Naive thymus-derived CD4-positive, alpha-beta T cell (primary cell): ENCODE measurements at regions of chr20 and their contacts with region 1.

Region 1: DNA sequence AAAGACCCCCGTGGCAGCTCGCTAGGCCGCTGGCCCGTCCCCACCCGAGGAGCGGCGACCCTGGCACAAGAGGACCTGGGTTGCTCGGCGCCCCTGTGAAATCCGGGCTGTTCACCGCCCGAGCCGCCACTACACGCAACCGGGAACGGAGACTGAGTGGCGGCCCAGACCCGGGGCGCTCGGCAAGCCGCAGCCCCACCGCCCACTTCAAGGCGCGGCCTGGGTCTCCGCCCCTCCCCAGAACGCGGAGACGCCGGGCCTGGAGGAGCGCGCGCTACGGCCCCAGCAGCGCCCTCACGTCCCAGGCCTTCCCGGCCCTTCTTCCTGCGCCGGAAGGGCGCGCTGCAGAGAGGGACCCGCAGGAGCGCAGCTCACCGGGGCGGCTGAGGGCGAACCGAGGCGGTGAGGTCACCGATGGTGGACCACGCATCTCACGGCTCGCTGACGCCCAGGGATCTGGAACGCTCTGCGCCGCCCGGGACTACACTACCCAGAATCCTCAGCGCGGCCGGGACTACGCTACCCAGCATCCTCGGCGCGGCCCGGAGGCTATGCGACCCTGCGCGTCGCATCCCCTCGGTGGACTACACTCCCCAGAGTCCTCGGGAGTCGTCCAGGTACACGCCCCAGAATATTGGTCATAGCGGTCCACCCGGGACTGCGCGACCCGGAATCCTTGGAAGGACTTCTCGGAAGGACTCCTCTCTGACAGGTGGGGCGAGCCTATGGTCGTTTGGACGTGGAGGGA is at the start of gene ZNF337:
- DNase-seq: peak; percentile 84 to 94 (median 89)
- ATAC-seq: peak; percentile 100
- H3K4me3 ChIP-seq: peak within 1 kb of the TSS; percentile 85
- H3K4me3 Mint-ChIP-seq: peak within 1 kb of the TSS; percentile 94 to 97 (median 96)
- H3K27ac ChIP-seq: peak within 1 kb of the TSS; percentile 85
- H3K27ac Mint-ChIP-seq: peak within 1 kb of the TSS; percentile 84 to 96 (median 93)
- H3K4me1 ChIP-seq: peaks cover 5 to 9% of the 10 kb centered on the region in 2 donors
- H3K4me1 Mint-ChIP-seq: peaks cover 19 to 58% (median 57%) of the 10 kb centered on the region in 7 donors
- H3K27me3 ChIP-seq: no peaks in the 10 kb centered on the region
- H3K27me3 Mint-ChIP-seq: peaks cover 0 to 5% (median 0%) of the 10 kb centered on the region in 5 donors
- total RNA-seq, gene ZNF337: 18.7 to 39.8 (median 21.2) TPM

Region 2: GRCh38 chr20:25057234-25058050 is 639.1 kb before region 1 on chr20:
- CTCF ChIA-PET with region 1: no interaction called
- POLR2A ChIA-PET with region 1: no interaction called
- intact Hi-C with region 1: loop called in 1 of 2 experiments (anchors 1 kb)
- DNase-seq: peak; percentile 67 to 86 (median 74)
- ATAC-seq: peak; percentile 77
- H3K4me3 ChIP-seq: peak overlapping the region; percentile 86
- H3K4me3 Mint-ChIP-seq: peak overlapping the region; percentile 81 to 90 (median 88)
- H3K27ac ChIP-seq: peak overlapping the region; percentile 87
- H3K27ac Mint-ChIP-seq: peak overlapping the region; percentile 72 to 94 (median 88)
- H3K4me1 ChIP-seq: peaks cover 33 to 48% of the 10 kb centered on the region in 2 donors
- H3K4me1 Mint-ChIP-seq: peaks cover 38 to 63% (median 47%) of the 10 kb centered on the region in 7 donors
- H3K27me3 ChIP-seq: no peaks in the 10 kb centered on the region
- H3K27me3 Mint-ChIP-seq: peaks cover 0 to 29% (median 0%) of the 10 kb centered on the region in 5 donors

Region 3: DNA sequence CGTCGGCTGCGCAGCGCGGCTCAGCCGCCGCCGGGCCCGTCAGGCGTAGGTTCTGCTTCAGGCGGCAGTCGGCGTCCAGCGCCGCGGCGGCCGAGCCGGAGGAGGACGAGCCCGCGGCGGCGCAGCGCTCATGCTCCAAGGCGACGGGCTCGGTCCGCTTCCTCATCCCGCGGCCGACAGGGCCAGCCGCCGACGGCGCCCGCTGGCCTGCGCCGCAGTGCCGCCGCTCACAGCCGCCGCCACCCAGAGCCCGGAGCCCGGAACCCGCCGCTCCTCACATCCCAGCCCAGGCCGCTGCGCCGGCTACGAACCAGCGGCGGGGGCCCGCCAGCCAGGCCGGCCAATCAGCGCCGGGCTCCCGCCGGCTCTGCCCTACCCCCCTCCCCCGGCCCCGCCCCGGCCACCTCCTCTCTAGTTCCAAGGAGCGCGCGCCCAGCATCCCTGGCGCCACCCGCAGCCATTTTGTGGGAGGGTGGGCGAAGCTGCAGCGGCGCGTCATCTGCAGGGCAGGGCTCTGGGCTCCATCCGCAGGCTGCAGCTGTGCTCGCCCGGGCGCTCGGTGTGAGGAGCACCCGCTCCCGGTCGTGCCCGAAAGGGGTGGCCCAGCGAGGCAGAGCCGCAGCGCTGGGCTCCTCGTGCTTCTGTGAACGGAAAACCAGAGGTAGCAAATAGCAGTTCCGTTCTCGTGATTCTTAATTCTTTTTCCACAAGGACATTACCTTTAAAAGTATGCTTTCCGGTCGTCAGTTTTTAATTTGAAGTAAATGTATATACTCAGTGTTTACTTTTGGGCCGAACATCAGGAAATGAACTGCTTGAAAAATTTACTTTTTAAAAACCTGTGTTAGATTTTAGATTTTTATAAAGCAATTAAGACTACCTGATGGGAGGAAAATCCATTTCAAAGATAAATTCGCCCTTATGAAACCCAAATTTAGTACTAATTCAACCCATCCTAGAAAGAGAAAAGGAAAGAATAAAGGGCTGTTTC is 305.7 kb before region 1 on chr20 and contains the start of gene ABHD12:
- CTCF ChIA-PET with region 1: no interaction called
- POLR2A ChIA-PET with region 1: no interaction called
- intact Hi-C with region 1: loop called (anchors 1 kb)
- DNase-seq: peak; percentile 80 to 93 (median 89)
- ATAC-seq: peak; percentile 96
- H3K4me3 ChIP-seq: peak within 1 kb of the TSS; percentile 62
- H3K4me3 Mint-ChIP-seq: peak within 1 kb of the TSS; percentile 83 to 94 (median 88)
- H3K27ac ChIP-seq: peak within 1 kb of the TSS; percentile 74
- H3K27ac Mint-ChIP-seq: peak within 1 kb of the TSS; percentile 46 to 96 (median 82)
- H3K4me1 ChIP-seq: no peaks in the 10 kb centered on the region
- H3K4me1 Mint-ChIP-seq: peaks cover 5 to 22% (median 18%) of the 10 kb centered on the region in 7 donors
- H3K27me3 ChIP-seq: no peaks in the 10 kb centered on the region
- H3K27me3 Mint-ChIP-seq: peaks cover 0 to 6% (median 0%) of the 10 kb centered on the region in 5 donors
- total RNA-seq, gene ABHD12: 16.5 to 27.6 (median 22.5) TPM

Region 4: DNA sequence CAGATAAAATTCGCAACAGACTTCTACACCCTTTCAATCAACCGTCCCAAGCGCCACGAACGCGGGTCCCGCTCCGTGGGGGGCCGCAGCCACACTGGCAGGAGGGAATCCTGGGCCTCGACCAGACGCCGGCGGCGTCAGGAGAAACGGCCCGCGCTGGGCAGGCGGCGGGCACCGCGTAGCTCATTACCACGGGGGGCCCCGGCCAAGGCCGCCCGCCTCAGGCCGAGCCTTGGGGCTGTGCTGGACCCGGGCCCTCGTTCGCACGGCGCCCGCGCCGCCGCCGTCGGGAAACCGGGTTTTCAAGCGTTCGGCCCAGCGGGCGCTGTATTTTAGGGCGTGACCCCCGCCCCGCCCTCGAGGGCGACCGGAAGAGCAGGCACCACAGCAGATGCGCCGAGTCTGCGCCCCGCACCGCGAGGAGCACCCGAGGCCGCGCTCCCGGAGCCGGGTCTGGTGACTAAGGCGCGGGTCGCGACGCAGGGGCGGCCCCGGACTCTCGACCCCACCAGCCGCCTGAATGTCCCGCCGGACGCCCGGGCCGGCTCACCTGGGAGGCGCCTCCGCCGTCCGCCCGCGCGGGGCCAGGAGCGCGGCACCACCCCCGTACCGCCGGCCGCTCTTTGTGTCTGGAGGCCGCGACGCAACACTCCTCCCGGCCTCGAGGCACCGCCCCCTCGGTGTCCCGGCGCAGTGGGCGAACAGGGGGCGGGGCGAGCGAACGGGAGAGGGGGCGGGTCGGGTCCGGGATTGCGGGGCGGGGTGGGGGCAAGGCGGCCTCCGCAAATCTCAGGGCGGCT is 111.5 kb before region 1 on chr20 and contains the start of gene NINL:
- CTCF ChIA-PET with region 1: no interaction called
- POLR2A ChIA-PET with region 1: no interaction called
- intact Hi-C with region 1: loop called in 1 of 2 experiments (anchors 1 kb)
- DNase-seq: peak; percentile 6 to 64 (median 47)
- ATAC-seq: peak; percentile 84
- H3K4me3 ChIP-seq: peak within 1 kb of the TSS; percentile 50
- H3K4me3 Mint-ChIP-seq: peak within 1 kb of the TSS; percentile 68 to 91 (median 80)
- H3K27ac ChIP-seq: peak within 1 kb of the TSS; percentile 33
- H3K27ac Mint-ChIP-seq: peak within 1 kb of the TSS in 8 of 9 donors; percentile 9 to 86 (median 62)
- H3K4me1 ChIP-seq: no peaks in the 10 kb centered on the region
- H3K4me1 Mint-ChIP-seq: peaks cover 0 to 19% (median 8%) of the 10 kb centered on the region in 7 donors
- H3K27me3 ChIP-seq: no peaks in the 10 kb centered on the region
- H3K27me3 Mint-ChIP-seq: peaks cover 0 to 21% (median 15%) of the 10 kb centered on the region in 5 donors
- total RNA-seq, gene NINL: 1.4 to 4.2 (median 3.0) TPM

Region 5: GRCh38 chr20:25706793-25707192 is 10.2 kb after region 1 on chr20:
- CTCF ChIA-PET with region 1: interaction called, 4 read pairs
- POLR2A ChIA-PET with region 1: interaction called, 3 read pairs
- intact Hi-C with region 1: loop called (anchors 1 kb)
- DNase-seq: peak in 8 of 9 donors; percentile 22 to 33 (median 30)
- ATAC-seq: peak; percentile 83
- H3K4me3 ChIP-seq: no peak overlapping the region
- H3K4me3 Mint-ChIP-seq: peak overlapping the region; percentile 38 to 78 (median 66)
- H3K27ac ChIP-seq: peak overlapping the region; percentile 10
- H3K27ac Mint-ChIP-seq: peak overlapping the region; percentile 49 to 92 (median 79)
- H3K4me1 ChIP-seq: peaks cover 9 to 18% of the 10 kb centered on the region in 2 donors
- H3K4me1 Mint-ChIP-seq: peaks cover 7 to 38% (median 30%) of the 10 kb centered on the region in 7 donors
- H3K27me3 ChIP-seq: no peaks in the 10 kb centered on the region
- H3K27me3 Mint-ChIP-seq: peaks cover 0 to 11% (median 0%) of the 10 kb centered on the region in 5 donors

Region 6: DNA sequence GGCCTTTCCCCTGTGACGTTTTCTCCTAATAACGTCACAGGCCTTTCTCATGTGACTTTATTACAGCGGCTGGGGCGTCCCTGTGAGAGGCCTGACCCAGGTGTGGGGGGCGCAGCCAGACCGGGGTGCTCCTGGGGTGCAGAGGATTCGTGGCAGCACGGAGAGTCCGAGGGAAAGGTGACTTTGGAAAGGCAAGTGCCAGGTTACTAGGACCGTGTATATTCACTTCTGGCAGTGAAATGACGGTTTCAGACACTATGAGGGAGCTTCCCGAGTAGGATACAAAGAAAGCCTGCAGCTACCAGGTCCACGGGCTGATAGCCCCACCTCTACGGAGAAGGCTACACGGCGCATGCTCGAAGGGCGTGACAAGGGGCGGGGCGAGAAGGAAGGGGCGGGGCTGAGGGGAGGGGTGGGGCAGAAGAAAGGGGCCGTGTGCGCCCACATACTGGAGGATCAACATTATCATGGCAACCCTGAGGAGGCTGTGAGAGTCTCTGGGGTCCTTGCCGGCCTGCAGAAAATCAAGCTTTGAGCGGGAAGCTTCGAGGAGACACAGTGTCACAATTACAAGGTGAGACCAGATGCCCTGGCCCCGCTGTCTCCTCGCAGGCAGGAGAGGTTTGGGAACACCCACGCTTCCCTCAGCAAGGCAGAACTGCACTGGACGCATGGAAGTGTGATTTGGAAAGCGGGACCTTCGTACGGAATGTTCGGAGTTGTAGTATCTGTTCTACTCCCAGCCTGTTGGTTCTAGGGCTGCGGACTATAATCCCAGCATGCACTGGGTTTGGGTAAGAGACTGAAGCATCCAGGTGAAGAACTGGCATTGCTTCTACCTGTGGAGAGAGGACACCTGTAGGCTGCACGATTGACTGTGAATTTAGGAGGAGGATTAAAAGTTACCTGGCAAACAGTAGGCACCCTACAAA is 54.5 kb after region 1 on chr20:
- CTCF ChIA-PET with region 1: no interaction called
- POLR2A ChIA-PET with region 1: no interaction called
- intact Hi-C with region 1: loop called (anchors 1 kb)
- DNase-seq: peak; percentile 28 to 63 (median 43)
- ATAC-seq: peak; percentile 96
- H3K4me3 ChIP-seq: peak overlapping the region; percentile 68
- H3K4me3 Mint-ChIP-seq: peak overlapping the region; percentile 83 to 93 (median 86)
- H3K27ac ChIP-seq: peak overlapping the region; percentile 59
- H3K27ac Mint-ChIP-seq: peak overlapping the region; percentile 19 to 95 (median 79)
- H3K4me1 ChIP-seq: peaks cover 0 to 4% of the 10 kb centered on the region in 2 donors
- H3K4me1 Mint-ChIP-seq: peaks cover 7 to 20% (median 14%) of the 10 kb centered on the region in 7 donors
- H3K27me3 ChIP-seq: no peaks in the 10 kb centered on the region
- H3K27me3 Mint-ChIP-seq: no peaks in the 10 kb centered on the region

Region 7: DNA sequence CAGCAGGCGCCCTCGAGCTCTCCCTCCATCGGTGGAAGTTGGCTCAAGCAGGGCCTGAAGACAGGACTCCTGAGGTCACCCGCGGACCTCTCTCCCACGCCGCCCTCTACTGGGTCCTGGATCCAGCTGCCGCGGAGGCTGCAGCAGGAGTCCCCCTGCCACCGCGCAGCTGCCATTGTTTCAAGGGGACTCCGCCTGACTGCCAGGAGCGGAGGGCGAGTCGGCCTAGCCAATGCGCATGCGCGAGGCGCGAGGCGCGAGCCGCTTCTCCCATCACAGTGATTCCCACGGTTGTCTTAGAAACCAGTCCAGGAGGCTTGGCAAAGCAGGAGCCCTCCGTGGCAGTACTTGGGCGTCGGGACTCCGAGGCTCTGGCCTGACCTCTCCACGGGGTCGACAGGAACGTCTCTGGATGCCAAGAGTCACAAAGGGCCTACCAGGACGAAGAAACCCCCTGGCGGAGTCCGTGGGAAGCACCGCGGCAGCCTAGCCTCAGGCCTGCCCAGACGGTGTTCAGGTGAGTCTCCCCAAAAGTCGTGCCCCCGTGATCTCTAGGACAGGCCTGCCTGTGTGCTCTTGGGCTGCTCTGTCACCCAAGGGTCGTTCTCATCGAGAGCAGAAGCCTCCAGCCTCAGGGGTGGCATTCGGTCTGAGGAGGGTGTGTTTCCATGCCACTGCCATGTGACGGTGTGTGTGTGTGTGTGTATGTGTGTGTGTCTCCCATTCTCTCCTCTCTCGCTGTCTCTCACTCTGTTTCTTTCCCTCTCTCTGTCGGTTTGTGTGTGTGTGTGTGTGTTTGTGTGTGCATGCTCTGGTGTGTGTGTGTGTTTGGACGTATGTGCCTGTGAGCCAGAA is 290.7 kb after region 1 on chr20:
- CTCF ChIA-PET with region 1: no interaction called
- POLR2A ChIA-PET with region 1: no interaction called
- intact Hi-C with region 1: loop called in 1 of 2 experiments (anchors 5 kb)
- DNase-seq: peak in 8 of 9 donors; percentile 56 to 79 (median 68)
- ATAC-seq: peak; percentile 79
- H3K4me3 ChIP-seq: peak overlapping the region; percentile 58
- H3K4me3 Mint-ChIP-seq: peak overlapping the region; percentile 54 to 87 (median 76)
- H3K27ac ChIP-seq: no peak overlapping the region
- H3K27ac Mint-ChIP-seq: peak overlapping the region in 3 of 9 donors; percentile 13 to 31 (median 31)
- H3K4me1 ChIP-seq: no peaks in the 10 kb centered on the region
- H3K4me1 Mint-ChIP-seq: peaks cover 2 to 39% (median 25%) of the 10 kb centered on the region in 7 donors
- H3K27me3 ChIP-seq: no peaks in the 10 kb centered on the region
- H3K27me3 Mint-ChIP-seq: peaks cover 0 to 6% (median 4%) of the 10 kb centered on the region in 5 donors